Left cardiac atrium (tissue), 4 donors: ENCODE measurements at regions of chr5 and their contacts with region 1.

Region 1: DNA sequence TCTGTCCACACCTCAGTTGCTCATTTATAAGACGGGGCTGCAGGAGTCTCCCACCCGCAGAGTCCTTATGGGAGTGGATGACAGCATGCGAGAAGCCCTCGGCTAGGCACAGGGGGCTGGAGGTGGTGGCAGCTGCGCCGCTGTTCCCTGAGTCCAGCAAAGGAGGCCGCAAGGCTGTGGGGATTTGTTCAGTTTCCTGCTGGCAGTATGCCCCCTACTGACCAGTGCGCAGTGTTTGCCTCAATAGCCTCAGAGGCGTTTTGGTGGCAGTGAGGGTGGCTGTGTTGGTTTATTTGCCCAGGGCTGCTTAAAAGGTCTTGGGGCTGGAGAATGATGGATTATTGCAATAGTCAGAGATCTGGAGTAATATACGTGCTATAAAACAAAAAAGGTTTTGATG is 176.3 kb upstream of the OTULINL start:
- DNase-seq: no peak
- ATAC-seq: no peak

Region 2: DNA sequence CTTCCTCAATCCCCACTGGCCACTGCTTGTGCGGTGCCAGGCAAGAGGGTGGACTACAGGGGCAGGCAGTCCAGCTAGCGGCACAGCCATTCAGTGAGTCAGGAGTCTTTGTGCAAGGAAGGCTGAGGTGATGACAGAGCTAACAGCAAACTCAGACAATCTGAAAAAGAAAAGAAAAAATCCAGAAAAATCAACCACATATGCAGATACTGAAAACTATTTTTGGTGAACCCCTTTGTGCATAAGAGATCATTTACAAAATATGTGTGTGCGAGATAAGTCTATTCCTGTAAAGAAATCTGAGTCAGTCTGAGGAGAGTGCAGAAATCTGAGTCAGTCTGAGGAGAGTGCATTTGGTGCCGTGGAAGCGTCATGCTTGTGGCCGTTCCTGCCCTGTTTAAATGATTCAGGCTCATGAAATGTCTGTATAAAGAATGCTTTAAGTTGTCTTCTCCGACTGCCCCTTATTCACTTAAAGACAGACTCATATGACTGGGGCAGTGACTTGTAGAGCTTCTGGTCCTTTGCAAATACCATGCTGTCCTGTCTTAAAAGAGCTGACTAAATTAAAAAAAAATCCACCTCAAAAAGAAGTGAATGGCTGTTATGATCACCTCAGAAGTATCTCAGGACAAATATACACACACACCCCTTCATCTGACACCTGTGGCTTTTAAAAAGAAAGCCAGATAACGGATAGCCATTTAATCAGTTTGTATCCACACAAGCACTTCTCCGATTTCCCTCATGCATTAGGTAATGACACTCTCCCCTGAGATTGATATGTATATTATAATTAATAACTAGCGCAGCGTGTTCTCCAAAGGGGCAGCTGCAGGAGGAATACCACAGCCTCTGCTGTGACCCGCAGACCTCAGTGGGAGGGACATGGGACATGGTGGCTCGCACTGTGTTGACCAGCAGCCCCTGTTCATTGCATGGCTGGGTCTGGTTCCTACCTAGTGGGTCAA is 214.8 kb before region 1 on chr5:
- intact Hi-C with region 1: no loop called
- DNase-seq: peak; percentile 52
- ATAC-seq: peak; percentile 64 to 96

Region 3: GRCh38 chr5:14450018-14450524 is 44.8 kb after region 1 on chr5:
- intact Hi-C with region 1: loop called in 1 of 2 experiments (anchors 5 kb)
- DNase-seq: peak; percentile 71
- ATAC-seq: peak; percentile 85 to 90